CD8-positive, alpha-beta T cell (primary cell): ENCODE measurements at regions of chr12 and their contacts with region 1.

Region 1: DNA sequence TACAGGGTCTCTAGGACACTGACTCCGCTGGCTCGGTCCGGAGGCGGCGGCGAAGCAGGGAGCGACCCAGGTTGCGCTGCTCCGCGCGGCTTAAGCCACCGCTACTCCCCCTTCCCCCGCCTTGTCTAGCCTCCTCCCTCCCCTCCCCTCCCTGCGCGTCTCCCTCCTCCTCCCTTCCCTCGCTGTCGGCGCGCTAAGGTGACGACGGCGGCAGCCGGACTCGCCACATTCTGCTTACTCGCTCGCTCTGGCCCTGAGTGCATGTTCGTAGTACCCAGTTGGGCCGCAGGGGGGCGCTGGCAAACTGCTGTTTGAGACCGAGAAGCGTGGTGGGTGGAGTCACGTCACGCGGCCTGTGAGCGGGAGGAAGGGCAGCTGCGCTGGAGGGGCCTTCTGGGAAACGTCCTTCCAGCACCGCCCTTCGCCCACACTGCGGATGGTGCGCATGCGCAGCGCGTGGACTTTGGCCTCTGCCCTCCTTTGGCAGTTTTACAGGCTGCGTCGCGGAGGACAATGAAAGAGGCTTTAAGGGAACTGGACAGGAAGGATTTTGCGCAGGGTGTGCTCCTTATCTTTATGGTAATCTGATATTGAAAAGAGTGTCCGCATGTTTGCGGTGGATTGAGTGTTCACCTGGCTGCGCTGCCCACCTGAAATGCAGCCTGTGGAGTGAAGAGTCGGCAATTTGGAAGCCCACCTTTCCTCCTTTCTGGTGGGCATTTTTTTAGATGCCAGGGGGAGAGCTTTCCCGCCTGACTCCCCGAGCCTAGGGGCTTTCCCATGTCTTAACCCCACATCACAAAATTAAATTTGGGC is at the start of gene SCAF11:
- DNase-seq: peak; percentile 100
- ATAC-seq: peak; percentile 80
- H3K4me3 ChIP-seq: peak within 1 kb of the TSS; percentile 89 to 95
- H3K4me3 Mint-ChIP-seq: peak within 1 kb of the TSS; percentile 93
- H3K27ac ChIP-seq: peak within 1 kb of the TSS; percentile 97
- H3K27ac Mint-ChIP-seq: peak within 1 kb of the TSS; percentile 97
- H3K4me1 ChIP-seq: peaks cover 42% of the 10 kb centered on the region
- H3K4me1 Mint-ChIP-seq: peaks cover 51% of the 10 kb centered on the region
- H3K27me3 ChIP-seq: no peaks in the 10 kb centered on the region
- H3K27me3 Mint-ChIP-seq: no peaks in the 10 kb centered on the region
- CTCF ChIP-seq: peak; percentile 75
- total RNA-seq, gene SCAF11: 204 to 218 TPM

Region 2: DNA sequence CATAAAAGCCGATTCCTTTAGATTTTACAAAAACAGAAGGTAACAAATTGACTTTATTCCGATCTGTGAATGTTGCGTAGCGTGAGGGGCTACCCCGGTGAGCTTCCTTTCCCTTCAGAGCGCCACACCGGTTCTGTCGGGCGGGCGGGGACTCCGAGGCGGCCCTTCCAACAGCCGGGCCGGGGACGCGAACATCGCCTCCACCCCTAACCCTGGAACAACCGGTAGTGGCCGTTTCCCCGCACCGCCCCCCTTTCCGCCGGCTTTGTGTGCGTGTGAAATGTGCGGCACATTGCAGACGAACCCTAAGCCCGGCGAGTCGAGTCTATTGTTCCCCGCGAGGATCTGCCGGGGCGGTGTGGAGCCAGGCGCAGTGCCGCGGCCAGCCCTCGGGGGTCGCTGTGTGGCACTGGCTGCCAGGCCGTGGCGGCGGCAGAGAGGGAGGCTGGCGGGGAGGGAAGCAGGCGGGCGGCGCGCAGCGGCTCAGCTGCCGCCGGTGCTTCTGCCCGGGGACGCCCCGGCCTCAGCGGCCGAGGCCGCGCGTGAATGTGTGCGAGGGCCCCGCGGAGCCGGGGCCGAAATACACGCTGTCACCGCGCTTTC is 261.9 kb before region 1 on chr12:
- CTCF ChIA-PET with region 1: interaction called, 7 read pairs
- POLR2A ChIA-PET with region 1: interaction called, 37 read pairs
- intact Hi-C with region 1: loop called (anchors 1 to 2 kb)
- DNase-seq: peak; percentile 93 to 98 (median 97)
- ATAC-seq: peak; percentile 76
- H3K4me3 ChIP-seq: peak overlapping the region; percentile 85 to 90
- H3K4me3 Mint-ChIP-seq: peak overlapping the region; percentile 96
- H3K27ac ChIP-seq: peak overlapping the region; percentile 90 to 96
- H3K27ac Mint-ChIP-seq: peak overlapping the region; percentile 97
- H3K4me1 ChIP-seq: peaks cover 20% of the 10 kb centered on the region
- H3K4me1 Mint-ChIP-seq: peaks cover 26% of the 10 kb centered on the region
- H3K27me3 ChIP-seq: no peaks in the 10 kb centered on the region
- H3K27me3 Mint-ChIP-seq: no peaks in the 10 kb centered on the region
- CTCF ChIP-seq: peak; percentile 90

Region 3: GRCh38 chr12:46153268-46153872 is 162.7 kb after region 1 on chr12:
- CTCF ChIA-PET with region 1: no interaction called
- POLR2A ChIA-PET with region 1: no interaction called
- intact Hi-C with region 1: loop called (anchors 1 to 5 kb)
- DNase-seq: peak in 2 of 9 experiments; percentile 40 to 65
- ATAC-seq: no peak
- H3K4me3 ChIP-seq: no peak overlapping the region
- H3K4me3 Mint-ChIP-seq: no peak overlapping the region
- H3K27ac ChIP-seq: no peak overlapping the region
- H3K27ac Mint-ChIP-seq: no peak overlapping the region
- H3K4me1 ChIP-seq: peaks cover 13% of the 10 kb centered on the region
- H3K4me1 Mint-ChIP-seq: peaks cover 19% of the 10 kb centered on the region
- H3K27me3 ChIP-seq: no peaks in the 10 kb centered on the region
- H3K27me3 Mint-ChIP-seq: peaks cover 1% of the 10 kb centered on the region
- CTCF ChIP-seq: peak; percentile 97

Region 4: GRCh38 chr12:46268590-46269558 is 278.2 kb after region 1 on chr12 and contains the start of gene SLC38A1:
- CTCF ChIA-PET with region 1: interaction called, 4 read pairs
- POLR2A ChIA-PET with region 1: interaction called, 24 read pairs
- intact Hi-C with region 1: loop called (anchors 1 kb)
- DNase-seq: peak; percentile 74 to 96 (median 91)
- ATAC-seq: peak; percentile 56
- H3K4me3 ChIP-seq: peak within 1 kb of the TSS; percentile 92 to 96
- H3K4me3 Mint-ChIP-seq: no peak within 1 kb of the TSS
- H3K27ac ChIP-seq: peak within 1 kb of the TSS; percentile 96 to 98
- H3K27ac Mint-ChIP-seq: no peak within 1 kb of the TSS
- H3K4me1 ChIP-seq: peaks cover 54% of the 10 kb centered on the region
- H3K4me1 Mint-ChIP-seq: peaks cover 41% of the 10 kb centered on the region
- H3K27me3 ChIP-seq: no peaks in the 10 kb centered on the region
- H3K27me3 Mint-ChIP-seq: no peaks in the 10 kb centered on the region
- CTCF ChIP-seq: no peak
- total RNA-seq, gene SLC38A1: 440 to 464 TPM

Region 5: GRCh38 chr12:47079468-47079980 is 1088.8 kb after region 1 on chr12 and contains the starts of genes AMIGO2 and PCED1B:
- CTCF ChIA-PET with region 1: no interaction called
- POLR2A ChIA-PET with region 1: no interaction called
- intact Hi-C with region 1: loop called in 1 of 2 experiments (anchors 5 kb)
- DNase-seq: peak; percentile 13 to 81 (median 69)
- ATAC-seq: peak; percentile 54
- H3K4me3 ChIP-seq: peak within 1 kb of the TSS; percentile 85 to 92
- H3K4me3 Mint-ChIP-seq: peak within 1 kb of the TSS; percentile 98
- H3K27ac ChIP-seq: peak within 1 kb of the TSS; percentile 63 to 85
- H3K27ac Mint-ChIP-seq: peak within 1 kb of the TSS; percentile 96
- H3K4me1 ChIP-seq: peaks cover 55% of the 10 kb centered on the region
- H3K4me1 Mint-ChIP-seq: peaks cover 76% of the 10 kb centered on the region
- H3K27me3 ChIP-seq: no peaks in the 10 kb centered on the region
- H3K27me3 Mint-ChIP-seq: no peaks in the 10 kb centered on the region
- CTCF ChIP-seq: no peak
- total RNA-seq, gene AMIGO2: 12.5 to 13.5 TPM
- total RNA-seq, gene PCED1B: 32.9 to 33.7 TPM

Region 6: DNA sequence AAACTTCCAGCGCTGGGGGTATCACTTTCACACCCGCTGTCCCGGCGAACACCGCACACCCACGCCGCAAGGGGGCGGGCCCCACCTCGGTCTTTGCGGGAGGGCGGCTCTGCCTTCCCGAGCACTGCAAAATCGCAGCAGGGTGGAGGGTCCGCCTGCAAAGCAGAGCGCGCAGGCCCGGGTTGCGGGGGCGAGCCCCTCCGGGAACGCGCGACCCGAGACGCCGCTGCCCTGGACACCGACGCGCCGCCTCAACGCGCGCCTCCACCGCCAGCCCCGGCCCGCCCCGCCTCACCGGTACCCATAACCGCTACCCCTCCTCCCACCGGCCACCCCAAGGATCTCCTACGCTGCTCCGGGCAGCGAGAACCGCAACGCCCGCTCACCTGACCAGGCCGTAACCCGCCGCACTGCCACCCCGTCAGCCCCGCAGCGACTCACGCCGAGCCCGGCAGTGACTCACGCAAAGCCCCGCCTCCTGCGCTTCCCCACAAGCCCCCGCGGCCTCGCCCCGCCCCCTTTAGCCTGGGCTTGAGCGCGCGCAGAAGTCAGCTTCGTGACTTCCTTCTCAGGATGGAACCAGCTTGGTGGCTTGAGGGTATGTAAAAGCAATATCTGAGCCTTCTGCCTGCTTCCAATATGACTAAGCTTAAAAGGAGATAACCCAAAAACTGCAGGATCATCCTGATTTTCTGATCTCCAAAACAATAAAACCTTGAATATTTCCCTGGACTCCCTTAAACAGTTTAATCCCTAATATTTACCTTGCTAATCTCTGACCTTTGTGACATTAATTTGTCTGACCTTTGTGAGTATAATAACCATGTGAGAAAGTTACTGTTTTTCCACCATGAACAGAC is 1715.1 kb after region 1 on chr12 and contains the start of gene RPAP3:
- CTCF ChIA-PET with region 1: no interaction called
- POLR2A ChIA-PET with region 1: no interaction called
- intact Hi-C with region 1: loop called (anchors 2 to 5 kb)
- DNase-seq: peak; percentile 92 to 98 (median 97)
- ATAC-seq: peak; percentile 95
- H3K4me3 ChIP-seq: peak within 1 kb of the TSS; percentile 63 to 73
- H3K4me3 Mint-ChIP-seq: peak within 1 kb of the TSS; percentile 91
- H3K27ac ChIP-seq: peak within 1 kb of the TSS; percentile 67 to 88
- H3K27ac Mint-ChIP-seq: peak within 1 kb of the TSS; percentile 96
- H3K4me1 ChIP-seq: peaks cover 48% of the 10 kb centered on the region
- H3K4me1 Mint-ChIP-seq: peaks cover 64% of the 10 kb centered on the region
- H3K27me3 ChIP-seq: no peaks in the 10 kb centered on the region
- H3K27me3 Mint-ChIP-seq: no peaks in the 10 kb centered on the region
- CTCF ChIP-seq: peak; percentile 77
- total RNA-seq, gene RPAP3: 17.3 to 18.3 TPM